HepG2 (cell line): ENCODE measurements at regions of chr17 and their contacts with region 1.

Region 1: DNA sequence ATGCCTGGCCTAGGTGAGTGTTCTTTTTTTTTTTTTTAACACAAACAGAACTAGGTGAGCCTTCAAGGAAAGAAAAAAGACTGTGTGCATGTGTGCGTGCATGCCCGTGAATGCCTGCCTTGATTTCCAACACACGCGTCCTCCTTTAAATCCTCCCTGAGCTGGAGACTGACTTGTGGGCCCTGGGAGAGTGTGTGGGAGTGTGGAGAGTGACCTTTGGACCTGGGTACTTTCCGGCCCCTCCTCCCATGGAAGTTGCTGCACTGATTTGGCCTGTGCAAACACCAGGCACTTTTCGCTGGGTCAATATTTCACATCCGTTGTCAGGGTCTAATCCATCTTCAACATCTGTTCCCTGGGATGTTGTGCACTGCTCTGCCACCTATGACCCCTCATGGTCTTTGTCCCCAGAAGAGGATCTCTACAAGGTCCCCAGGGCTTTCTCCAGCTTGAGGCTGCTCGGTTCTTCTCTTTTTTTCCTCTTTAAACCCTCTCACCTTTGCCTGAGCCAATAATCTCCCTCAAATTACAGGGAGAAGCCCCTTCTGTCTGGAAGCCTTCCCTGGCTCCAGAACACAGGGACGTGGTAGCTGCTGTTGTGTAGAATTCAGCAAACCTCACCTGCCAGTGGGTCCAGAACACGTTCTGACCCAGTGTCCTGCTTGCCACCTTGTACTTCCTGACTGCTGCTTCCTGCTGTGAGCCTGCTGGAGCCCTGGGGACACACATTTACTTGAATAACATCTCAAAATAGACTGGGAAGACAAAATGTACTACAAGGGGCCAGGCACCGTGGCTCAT is 20.8 kb upstream of the ATP5MC1 start:
- DNase-seq: peak; percentile 99
- ATAC-seq: peak; percentile 96
- H3K4me3 ChIP-seq: peak overlapping the region; percentile 17 to 60 (median 25); a peak in 4 of 6 replicates
- H3K27ac ChIP-seq: peak overlapping the region; percentile 97
- H3K4me1 ChIP-seq: peaks cover 64% of the 10 kb centered on the region
- H3K27me3 ChIP-seq: no peaks in the 10 kb centered on the region
- CTCF ChIP-seq: peak; percentile 45; the same call in 1 of the 2 replicates
- EP300 ChIP-seq: peak; percentile 98
- POLR2A ChIP-seq: peak; percentile 56 to 74
- RAD21 ChIP-seq: peak; percentile 45; the same call in 1 of the 2 replicates

Region 2: GRCh38 chr17:48830840-48831548 is 40.8 kb before region 1 on chr17 and contains the start of gene CALCOCO2:
- CTCF ChIA-PET with region 1: no interaction called
- POLR2A ChIA-PET with region 1: interaction called, 16 read pairs
- in situ Hi-C with region 1: no loop called
- intact Hi-C with region 1: loop called (anchors 2 kb)
- DNase-seq: peak; percentile 95
- ATAC-seq: peak; percentile 97
- H3K4me3 ChIP-seq: peak within 1 kb of the TSS; percentile 81 to 99 (median 87)
- H3K27ac ChIP-seq: peak within 1 kb of the TSS; percentile 67
- H3K4me1 ChIP-seq: peaks cover 52% of the 10 kb centered on the region
- H3K27me3 ChIP-seq: no peaks in the 10 kb centered on the region; a peak in 1 of 5 replicates
- CTCF ChIP-seq: peak; percentile 38; the same call in 1 of the 2 replicates
- EP300 ChIP-seq: 0 out of 4 replicates have a peak, but pooled peaks of 1 of the 2 experiments have one; percentile 13
- POLR2A ChIP-seq: peak; percentile 70 to 93
- RAD21 ChIP-seq: peak; percentile 35; the same call in 1 of the 2 replicates
- total RNA-seq, gene CALCOCO2: 72.9 and 112 TPM in 2 replicates

Region 3: DNA sequence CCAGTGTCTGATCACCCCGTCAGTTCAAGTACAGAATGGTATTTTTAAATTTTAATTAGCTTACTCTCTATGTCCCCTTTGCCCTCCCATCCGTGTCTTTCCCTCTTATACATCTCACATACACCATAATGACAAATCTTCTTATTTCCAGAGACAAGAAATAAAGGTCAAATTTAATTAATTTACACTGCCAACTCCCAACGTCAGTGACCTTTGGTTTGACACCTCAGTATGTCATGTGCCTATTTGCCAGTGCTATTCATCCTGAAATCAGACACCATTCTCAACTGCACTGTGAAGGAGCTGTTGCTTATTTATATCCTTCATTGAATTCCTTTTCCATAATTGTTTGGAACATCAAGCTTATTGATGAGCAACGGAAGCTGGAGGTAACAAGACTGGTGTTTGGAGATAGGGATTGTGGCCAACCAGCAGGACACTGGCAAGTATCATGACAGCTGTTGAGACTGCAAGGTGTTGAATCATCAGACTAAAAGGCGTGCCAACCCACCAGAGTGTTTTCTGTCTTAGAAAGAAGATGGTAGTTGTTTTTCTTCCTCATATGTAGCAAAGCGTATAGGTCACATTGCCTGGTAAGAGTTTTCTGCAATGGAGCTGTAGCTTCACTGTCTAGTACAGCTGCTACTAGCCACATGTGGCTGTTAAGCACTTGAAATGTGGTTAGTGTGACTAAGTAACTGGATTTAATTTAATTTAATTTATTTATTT is 28.4 kb before region 1 on chr17:
- CTCF ChIA-PET with region 1: no interaction called
- POLR2A ChIA-PET with region 1: no interaction called
- in situ Hi-C with region 1: no loop called
- intact Hi-C with region 1: no loop called
- DNase-seq: no peak
- ATAC-seq: no peak
- H3K4me3 ChIP-seq: no peak overlapping the region
- H3K27ac ChIP-seq: no peak overlapping the region
- H3K4me1 ChIP-seq: 0 out of 2 replicates have a peak, but pooled peaks cover 8% of the 10 kb centered on the region
- H3K27me3 ChIP-seq: no peaks in the 10 kb centered on the region
- CTCF ChIP-seq: no peak
- EP300 ChIP-seq: no peak
- POLR2A ChIP-seq: no peak
- RAD21 ChIP-seq: no peak

Region 4: GRCh38 chr17:48860034-48860433 is 11.7 kb before region 1 on chr17:
- CTCF ChIA-PET with region 1: no interaction called
- POLR2A ChIA-PET with region 1: interaction called, 26 read pairs
- in situ Hi-C with region 1: no loop called
- intact Hi-C with region 1: no loop called
- DNase-seq: no peak
- ATAC-seq: peak; percentile 62
- H3K4me3 ChIP-seq: no peak overlapping the region
- H3K27ac ChIP-seq: no peak overlapping the region
- H3K4me1 ChIP-seq: no peaks in the 10 kb centered on the region
- H3K27me3 ChIP-seq: no peaks in the 10 kb centered on the region
- CTCF ChIP-seq: no peak
- EP300 ChIP-seq: no peak
- POLR2A ChIP-seq: no peak
- RAD21 ChIP-seq: no peak

Region 5: DNA sequence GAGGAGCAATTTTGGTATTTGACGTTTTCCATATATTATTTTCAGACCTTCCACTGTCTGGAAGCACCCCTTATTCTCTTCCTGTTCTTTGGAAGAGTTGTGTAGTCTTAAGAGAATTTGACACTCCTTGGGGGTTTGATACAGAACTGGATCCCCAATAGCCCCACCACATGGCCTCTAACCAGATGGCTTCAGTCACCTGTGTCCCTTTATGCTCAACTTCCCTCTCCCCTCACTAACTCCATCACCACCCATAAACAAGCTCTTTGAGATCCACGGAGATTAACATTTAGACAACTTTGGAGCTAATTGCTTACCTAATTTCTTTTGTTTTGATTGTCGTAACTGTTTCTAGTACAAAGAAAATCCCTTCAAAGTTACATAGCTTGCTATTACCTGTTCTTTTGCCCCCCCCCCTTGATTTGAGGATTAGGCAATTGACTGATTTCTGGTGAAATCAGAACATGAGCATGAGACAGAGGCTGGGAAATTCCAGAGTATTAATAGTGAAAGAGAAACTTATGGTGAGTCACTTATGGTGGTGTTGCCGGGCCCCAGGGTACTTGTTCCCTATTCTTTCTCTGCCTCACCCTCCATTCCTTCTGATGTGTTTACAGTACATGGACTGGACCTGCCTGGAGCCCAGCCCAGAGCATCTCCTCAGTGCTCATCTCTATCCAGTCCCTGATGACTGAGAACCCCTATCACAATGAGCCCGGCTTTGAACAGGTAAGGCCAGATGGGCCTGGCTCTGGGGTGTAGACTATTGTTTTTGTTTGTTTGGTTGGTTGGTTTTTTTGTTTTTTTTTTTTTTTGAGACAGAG is 43.9 kb after region 1 on chr17:
- CTCF ChIA-PET with region 1: no interaction called
- POLR2A ChIA-PET with region 1: no interaction called
- in situ Hi-C with region 1: no loop called
- intact Hi-C with region 1: no loop called
- DNase-seq: no peak
- ATAC-seq: peak; percentile 51
- H3K4me3 ChIP-seq: no peak overlapping the region
- H3K27ac ChIP-seq: no peak overlapping the region
- H3K4me1 ChIP-seq: peaks cover 25% of the 10 kb centered on the region
- H3K27me3 ChIP-seq: no peaks in the 10 kb centered on the region
- CTCF ChIP-seq: no peak
- EP300 ChIP-seq: no peak
- POLR2A ChIP-seq: no peak
- RAD21 ChIP-seq: no peak